ENCODE measurements at regions of chr11 and their contacts with region 1.

Region 1: DNA sequence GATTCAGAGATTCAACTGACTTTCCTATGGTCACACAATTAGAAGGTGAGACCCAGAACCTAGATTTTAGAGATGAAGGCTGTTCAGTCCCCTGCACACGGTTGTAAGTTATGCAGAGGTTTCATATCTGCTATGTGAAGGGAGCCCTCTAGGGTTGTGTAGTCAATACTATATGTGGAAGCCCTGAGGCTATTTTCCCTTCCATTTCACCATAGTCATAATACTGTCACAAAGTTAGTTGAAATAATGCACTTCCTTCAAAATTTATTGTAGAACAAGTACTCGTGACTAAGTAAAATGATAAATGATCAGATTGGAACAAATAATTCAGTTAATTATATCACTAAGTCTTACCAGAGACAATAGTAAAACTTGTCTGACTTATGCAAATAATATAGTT is 48.8 kb downstream of the ENDOD1 start:
- DNase-seq: peak; percentile 38
- ATAC-seq: peak; percentile 83
- H3K4me3 ChIP-seq: no peak overlapping the region
- H3K4me3 Mint-ChIP-seq: no peak overlapping the region
- H3K27ac ChIP-seq: no peak overlapping the region
- H3K27ac Mint-ChIP-seq: no peak overlapping the region
- H3K4me1 ChIP-seq: no peaks in the 10 kb centered on the region
- H3K4me1 Mint-ChIP-seq: no peaks in the 10 kb centered on the region
- H3K27me3 ChIP-seq: no peaks in the 10 kb centered on the region
- H3K27me3 Mint-ChIP-seq: no peaks in the 10 kb centered on the region
- CTCF ChIP-seq: peak; percentile 57

Region 2: DNA sequence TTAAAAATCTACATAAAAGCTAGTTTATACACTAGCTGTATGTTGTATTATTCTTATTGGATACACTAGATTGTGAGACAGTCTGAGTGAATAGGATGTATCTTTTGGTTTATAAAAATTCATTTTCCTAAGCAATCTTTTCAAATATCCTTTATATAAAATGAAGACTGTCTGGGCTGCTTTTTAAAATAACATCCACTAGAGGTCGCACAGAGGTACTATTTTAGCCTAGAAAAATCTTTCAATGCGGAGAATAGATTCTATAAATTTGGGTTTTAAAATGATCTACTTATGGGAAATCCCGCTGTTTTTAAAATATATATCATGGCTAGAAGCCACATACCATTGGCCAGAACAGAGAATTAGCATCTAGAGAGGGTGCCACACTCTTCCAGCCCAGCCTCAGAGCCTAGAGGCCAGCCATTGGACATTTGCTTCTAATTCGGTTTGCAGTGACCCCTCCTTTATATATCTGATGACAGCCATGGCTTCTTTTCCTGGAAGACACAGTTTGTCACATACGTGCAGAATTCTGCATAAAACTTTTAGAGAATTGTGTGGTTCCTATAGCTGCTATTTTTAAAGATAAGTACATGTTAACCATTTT is 618.9 kb before region 1 on chr11:
- CTCF ChIA-PET with region 1: no interaction called
- POLR2A ChIA-PET with region 1: no interaction called
- intact Hi-C with region 1: loop called (anchors 10 kb)
- DNase-seq: peak; percentile 48
- ATAC-seq: no peak
- H3K4me3 ChIP-seq: no peak overlapping the region
- H3K4me3 Mint-ChIP-seq: no peak overlapping the region
- H3K27ac ChIP-seq: no peak overlapping the region
- H3K27ac Mint-ChIP-seq: no peak overlapping the region
- H3K4me1 ChIP-seq: no peaks in the 10 kb centered on the region
- H3K4me1 Mint-ChIP-seq: no peaks in the 10 kb centered on the region
- H3K27me3 ChIP-seq: peaks cover 0 to 4% (median 2%) of the 10 kb centered on the region in 4 experiments
- H3K27me3 Mint-ChIP-seq: peaks cover 27% of the 10 kb centered on the region
- CTCF ChIP-seq: peak; percentile 83

Region 3: DNA sequence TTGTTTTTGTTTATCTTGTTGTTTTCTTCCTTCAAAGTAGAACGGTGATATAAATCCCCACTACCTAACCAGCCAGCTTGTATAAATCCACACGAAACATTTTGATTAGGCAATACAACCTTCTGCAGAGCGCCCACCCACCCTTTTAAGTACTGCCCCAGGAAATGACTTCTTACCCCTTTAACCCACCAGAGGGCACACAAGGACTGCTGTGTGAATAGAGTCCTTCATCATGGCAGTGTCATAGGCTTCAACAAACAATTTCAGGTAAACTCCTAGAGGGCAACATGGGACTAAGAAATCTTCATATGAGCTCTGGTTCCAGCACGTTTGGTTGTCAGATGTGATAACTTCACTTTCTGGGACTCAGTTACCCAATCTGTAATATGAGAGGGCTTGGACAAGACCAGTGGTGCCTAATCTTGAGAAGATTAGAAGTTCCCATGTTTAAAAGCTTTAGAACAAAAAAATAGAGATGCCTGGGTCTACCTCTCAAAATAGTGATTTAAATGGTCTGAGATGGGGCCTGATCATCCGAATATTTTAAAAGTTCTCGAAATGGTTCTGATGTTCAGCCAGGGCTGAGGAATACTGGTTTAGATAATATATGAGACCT is 515.2 kb before region 1 on chr11:
- CTCF ChIA-PET with region 1: no interaction called
- POLR2A ChIA-PET with region 1: no interaction called
- intact Hi-C with region 1: loop called (anchors 5 kb)
- DNase-seq: peak; percentile 49
- ATAC-seq: peak; percentile 47
- H3K4me3 ChIP-seq: no peak overlapping the region
- H3K4me3 Mint-ChIP-seq: no peak overlapping the region
- H3K27ac ChIP-seq: no peak overlapping the region
- H3K27ac Mint-ChIP-seq: no peak overlapping the region
- H3K4me1 ChIP-seq: no peaks in the 10 kb centered on the region
- H3K4me1 Mint-ChIP-seq: no peaks in the 10 kb centered on the region
- H3K27me3 ChIP-seq: peaks cover 0 to 6% (median 0%) of the 10 kb centered on the region in 4 experiments
- H3K27me3 Mint-ChIP-seq: peaks cover 18% of the 10 kb centered on the region
- CTCF ChIP-seq: peak; percentile 34

Region 4: DNA sequence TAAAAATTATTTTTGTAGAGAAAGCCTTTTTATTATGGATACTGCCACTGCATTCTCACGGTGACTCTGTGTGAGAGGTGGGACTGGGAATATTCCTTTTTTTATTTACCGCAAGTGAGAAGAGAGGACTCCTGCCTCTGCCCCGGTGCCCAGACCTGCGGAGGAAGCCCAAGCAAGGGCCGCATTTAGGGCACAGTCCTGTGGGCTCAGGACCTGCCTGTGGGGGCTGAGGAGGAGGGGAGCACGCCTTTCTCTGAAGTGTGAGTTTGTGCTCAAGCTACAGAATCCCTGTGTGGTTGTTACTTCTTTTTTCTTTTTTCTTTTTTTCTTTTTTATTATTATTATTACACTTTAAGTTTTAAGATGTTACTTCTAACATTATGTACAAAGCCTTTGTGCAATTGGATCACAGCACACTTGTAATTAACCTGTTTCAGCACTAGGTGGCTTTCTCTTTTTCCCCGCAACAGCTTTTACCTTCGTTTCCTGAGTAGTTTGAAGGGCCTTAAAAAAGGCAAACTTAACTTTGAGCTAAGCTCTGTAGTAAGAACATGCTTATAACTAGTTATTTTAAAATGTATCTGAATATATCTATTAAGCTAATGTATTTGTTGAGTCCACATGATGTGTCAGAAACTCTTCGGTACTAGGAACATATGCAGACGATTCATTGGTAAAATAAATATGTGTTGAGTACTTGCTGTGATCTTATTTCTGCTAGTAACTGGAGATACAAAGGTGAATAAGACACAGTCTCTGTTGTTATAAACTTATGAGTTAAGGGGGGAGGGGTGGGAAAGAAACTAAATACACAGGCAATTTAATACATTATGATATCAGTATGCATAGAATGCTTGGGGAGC is 352.0 kb before region 1 on chr11:
- CTCF ChIA-PET with region 1: no interaction called
- POLR2A ChIA-PET with region 1: no interaction called
- intact Hi-C with region 1: loop called (anchors 5 kb)
- DNase-seq: peak; percentile 30
- ATAC-seq: peak; percentile 41
- H3K4me3 ChIP-seq: no peak overlapping the region
- H3K4me3 Mint-ChIP-seq: no peak overlapping the region
- H3K27ac ChIP-seq: no peak overlapping the region
- H3K27ac Mint-ChIP-seq: no peak overlapping the region
- H3K4me1 ChIP-seq: no peaks in the 10 kb centered on the region
- H3K4me1 Mint-ChIP-seq: no peaks in the 10 kb centered on the region
- H3K27me3 ChIP-seq: no peaks in the 10 kb centered on the region
- H3K27me3 Mint-ChIP-seq: no peaks in the 10 kb centered on the region
- CTCF ChIP-seq: peak; percentile 74

Region 5: DNA sequence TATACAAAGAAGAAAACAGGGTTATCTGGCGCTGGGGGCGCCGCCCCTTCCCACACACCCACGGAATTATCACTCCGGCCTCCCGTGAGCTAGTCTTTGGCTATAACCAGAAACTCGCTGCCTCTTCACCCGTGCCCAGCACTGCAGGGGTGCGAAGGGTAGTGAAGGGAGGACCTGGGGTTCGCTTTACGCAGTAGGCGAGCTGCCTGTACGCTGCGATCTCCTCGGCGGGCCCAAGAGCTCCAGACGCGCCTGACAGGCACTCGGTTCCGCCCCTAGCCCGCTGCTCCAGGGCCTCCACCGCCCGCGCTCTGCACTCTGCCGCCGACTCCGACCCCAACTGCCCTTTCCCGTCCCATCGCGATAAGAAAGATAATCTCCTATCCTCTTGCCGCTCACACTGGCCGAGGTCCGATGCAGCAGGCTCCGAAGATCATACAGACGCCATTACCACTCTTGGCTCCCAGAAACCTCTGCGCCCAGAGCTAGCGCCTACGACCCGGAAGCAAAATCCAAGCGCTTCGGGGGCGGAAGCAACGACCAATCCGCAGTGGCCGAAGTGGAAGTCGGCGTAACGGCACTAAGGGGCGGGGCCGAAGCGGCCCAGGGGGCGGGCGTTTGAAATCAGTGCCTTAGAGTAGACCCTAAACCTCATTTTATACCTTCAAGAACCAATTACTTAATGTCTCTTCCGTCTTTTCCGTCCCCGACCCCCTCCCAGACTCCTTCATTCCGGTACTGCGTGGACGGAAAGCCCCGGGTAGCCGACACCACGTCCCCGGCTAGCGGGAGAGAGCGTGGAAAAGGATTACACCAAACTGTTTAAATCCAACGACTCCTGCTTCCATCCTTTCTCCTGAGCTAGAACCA is 165.1 kb before region 1 on chr11 and contains the starts of genes CWC15 and KDM4D:
- CTCF ChIA-PET with region 1: interaction called, 3 read pairs
- POLR2A ChIA-PET with region 1: interaction called, 4 read pairs
- intact Hi-C with region 1: loop called (anchors 5 kb)
- DNase-seq: peak; percentile 94
- ATAC-seq: peak; percentile 100
- H3K4me3 ChIP-seq: peak within 1 kb of the TSS; percentile 75 to 97 (median 87)
- H3K4me3 Mint-ChIP-seq: peak within 1 kb of the TSS; percentile 92
- H3K27ac ChIP-seq: peak within 1 kb of the TSS; percentile 74 to 83
- H3K27ac Mint-ChIP-seq: peak within 1 kb of the TSS; percentile 94
- H3K4me1 ChIP-seq: peaks cover 10 to 14% of the 10 kb centered on the region in 2 donors
- H3K4me1 Mint-ChIP-seq: peaks cover 13% of the 10 kb centered on the region
- H3K27me3 ChIP-seq: no peaks in the 10 kb centered on the region
- H3K27me3 Mint-ChIP-seq: no peaks in the 10 kb centered on the region
- CTCF ChIP-seq: no peak
- total RNA-seq, gene CWC15: 59.5 and 59.8 TPM in 2 replicates
- total RNA-seq, gene KDM4D: 0.44 and 0.73 TPM in 2 replicates

Region 6: GRCh38 chr11:95089620-95090542 is 48.6 kb before region 1 on chr11 and contains the start of gene ENDOD1:
- CTCF ChIA-PET with region 1: interaction called, 18 read pairs
- POLR2A ChIA-PET with region 1: interaction called, 4 read pairs
- intact Hi-C with region 1: loop called (anchors 1 kb)
- DNase-seq: peak; percentile 93
- ATAC-seq: peak; percentile 94
- H3K4me3 ChIP-seq: peak within 1 kb of the TSS; percentile 13 to 82 (median 79)
- H3K4me3 Mint-ChIP-seq: peak within 1 kb of the TSS; percentile 94
- H3K27ac ChIP-seq: peak within 1 kb of the TSS; percentile 79 to 94
- H3K27ac Mint-ChIP-seq: peak within 1 kb of the TSS; percentile 98
- H3K4me1 ChIP-seq: peaks cover 50 to 52% of the 10 kb centered on the region in 2 donors
- H3K4me1 Mint-ChIP-seq: peaks cover 59% of the 10 kb centered on the region
- H3K27me3 ChIP-seq: no peaks in the 10 kb centered on the region
- H3K27me3 Mint-ChIP-seq: no peaks in the 10 kb centered on the region
- CTCF ChIP-seq: no peak
- total RNA-seq, gene ENDOD1: 11.7 and 12.0 TPM in 2 replicates

Region 7: DNA sequence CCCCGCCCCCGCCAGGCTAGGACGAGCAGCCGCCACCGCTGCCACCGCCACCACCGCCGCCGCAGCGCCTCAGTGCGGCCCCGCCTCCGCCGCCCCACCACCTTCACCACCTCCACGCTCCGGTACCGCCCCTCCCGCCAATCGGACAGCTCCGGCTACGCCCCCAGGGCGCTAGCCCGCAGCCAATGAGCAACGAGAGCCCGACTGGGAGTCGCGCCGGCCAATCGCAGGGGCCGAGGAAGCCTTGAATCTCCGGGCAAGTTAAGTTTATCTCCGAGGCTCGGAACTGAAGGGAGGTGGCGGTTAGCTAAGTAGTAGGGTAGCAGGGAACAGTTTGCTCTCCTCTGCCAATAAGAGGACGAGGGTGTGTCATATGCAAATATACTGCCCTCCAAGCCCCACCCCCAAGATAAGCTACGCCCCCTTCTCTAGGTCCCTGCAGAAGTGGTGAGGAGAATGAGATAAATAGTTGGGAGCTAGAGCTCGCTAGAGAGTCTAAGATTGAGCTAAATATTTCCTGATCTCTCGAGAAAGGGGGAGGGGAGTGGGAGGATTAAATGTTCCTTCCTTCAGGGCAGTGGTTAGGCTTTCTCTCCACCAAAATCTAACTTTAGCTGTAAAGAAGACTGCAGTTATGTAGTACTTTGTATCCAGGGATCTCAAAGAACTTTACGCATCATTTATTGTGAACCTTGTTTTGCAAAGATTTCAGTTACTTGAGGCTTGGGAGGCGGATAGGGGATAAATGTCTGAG is 92.9 kb after region 1 on chr11 and contains the start of gene SESN3:
- CTCF ChIA-PET with region 1: no interaction called
- POLR2A ChIA-PET with region 1: no interaction called
- intact Hi-C with region 1: no loop called
- DNase-seq: peak; percentile 99
- ATAC-seq: peak; percentile 83
- H3K4me3 ChIP-seq: peak within 1 kb of the TSS; percentile 73 to 94 (median 88)
- H3K4me3 Mint-ChIP-seq: no peak within 1 kb of the TSS
- H3K27ac ChIP-seq: peak within 1 kb of the TSS; percentile 94 to 96
- H3K27ac Mint-ChIP-seq: peak within 1 kb of the TSS; percentile 95
- H3K4me1 ChIP-seq: peaks cover 29 to 32% of the 10 kb centered on the region in 2 donors
- H3K4me1 Mint-ChIP-seq: peaks cover 31% of the 10 kb centered on the region
- H3K27me3 ChIP-seq: no peaks in the 10 kb centered on the region
- H3K27me3 Mint-ChIP-seq: no peaks in the 10 kb centered on the region
- CTCF ChIP-seq: no peak
- total RNA-seq, gene SESN3: 519 and 537 TPM in 2 replicates

Measured in B cell (primary cell).